Activated T-helper 1 cell treated with anti-CD3 and anti-CD28 coated beads, Interleukin-12 subunit alpha, Interleukin-12 subunit beta, Interleukin-2, Interleukin-4 antibody, amounts not matched to agents 30 ng/mL and 10 ng/mL and 1 ng/mL, durations not matched to agents 14 hours and 24 hours and 36 hours (primary cell): ENCODE measurements at regions of chr2 and their contacts with region 1.

Region 1: GRCh38 chr2:216119986-216120385 is 10.8 kb downstream of the XRCC5 start:
- DNase-seq: no peak
- H3K4me3 Mint-ChIP-seq: peak overlapping the region; percentile 78
- H3K27ac Mint-ChIP-seq: peak overlapping the region; percentile 95
- H3K4me1 Mint-ChIP-seq: peaks cover 78% of the 10 kb centered on the region
- H3K27me3 Mint-ChIP-seq: no peaks in the 10 kb centered on the region

Region 2: GRCh38 chr2:216183462-216183861 is 63.5 kb after region 1 on chr2:
- intact Hi-C with region 1: no loop called
- DNase-seq: no peak
- H3K4me3 Mint-ChIP-seq: no peak overlapping the region
- H3K27ac Mint-ChIP-seq: no peak overlapping the region
- H3K4me1 Mint-ChIP-seq: peaks cover 59% of the 10 kb centered on the region
- H3K27me3 Mint-ChIP-seq: no peaks in the 10 kb centered on the region

Region 3: GRCh38 chr2:216206041-216206703 is 86.2 kb after region 1 on chr2:
- intact Hi-C with region 1: loop called (anchors 1 kb)
- DNase-seq: no peak
- H3K4me3 Mint-ChIP-seq: no peak overlapping the region
- H3K27ac Mint-ChIP-seq: peak overlapping the region; percentile 87
- H3K4me1 Mint-ChIP-seq: peaks cover 79% of the 10 kb centered on the region
- H3K27me3 Mint-ChIP-seq: no peaks in the 10 kb centered on the region